ENCODE measurements at regions of chr3 and their contacts with region 1.

Region 1: GRCh38 chr3:58008140-58009025 is at the start of gene FLNB:
- DNase-seq: peak in 1 of 2 donors; percentile 81
- H3K4me3 ChIP-seq: peak within 1 kb of the TSS; percentile 85 to 100
- H3K27ac ChIP-seq: peak within 1 kb of the TSS; percentile 80 to 87
- H3K4me1 ChIP-seq: peaks cover 8 to 25% of the 10 kb centered on the region in 2 donors
- H3K27me3 ChIP-seq: no peaks in the 10 kb centered on the region
- CTCF ChIP-seq: peak; percentile 77 to 91 (median 87)
- total RNA-seq, gene FLNB: 144 TPM

Region 2: GRCh38 chr3:57864853-57865252 is 143.5 kb before region 1 on chr3:
- intact Hi-C with region 1: loop called (anchors 5 kb)
- DNase-seq: no peak
- H3K4me3 ChIP-seq: no peak overlapping the region
- H3K27ac ChIP-seq: peak overlapping the region in 1 of 2 donors; percentile 30
- H3K4me1 ChIP-seq: no peaks in the 10 kb centered on the region
- H3K27me3 ChIP-seq: no peaks in the 10 kb centered on the region
- CTCF ChIP-seq: peak; percentile 17 to 72 (median 67)

Region 3: GRCh38 chr3:57951066-57951882 is 57.1 kb before region 1 on chr3:
- intact Hi-C with region 1: loop called (anchors 5 kb)
- DNase-seq: peak; percentile 74 to 90
- H3K4me3 ChIP-seq: peak overlapping the region in 1 of 2 donors; percentile 19
- H3K27ac ChIP-seq: peak overlapping the region; percentile 93 to 97
- H3K4me1 ChIP-seq: peaks cover 6 to 29% of the 10 kb centered on the region in 2 donors
- H3K27me3 ChIP-seq: no peaks in the 10 kb centered on the region
- CTCF ChIP-seq: no peak

Region 4: DNA sequence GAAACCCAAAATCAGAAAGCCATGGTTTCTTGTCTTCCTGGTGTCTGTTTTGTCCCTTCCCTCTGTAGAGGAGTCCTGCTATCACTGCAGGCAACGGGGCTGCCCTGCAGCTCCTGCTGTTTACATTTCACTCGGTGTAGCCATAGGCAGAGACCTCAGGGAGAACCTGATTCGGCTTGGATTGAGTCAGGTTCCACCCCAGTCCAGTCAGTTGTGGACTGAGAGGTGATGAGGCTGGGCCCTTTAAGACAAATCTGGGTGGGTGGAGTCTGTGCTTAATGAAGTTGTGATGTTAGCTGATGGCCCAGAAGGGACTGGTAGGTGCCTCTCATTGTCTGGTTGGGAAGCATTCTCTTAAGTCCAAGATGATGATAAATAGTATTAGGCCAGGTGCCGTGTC is 35.5 kb after region 1 on chr3:
- intact Hi-C with region 1: no loop called
- DNase-seq: no peak
- H3K4me3 ChIP-seq: no peak overlapping the region
- H3K27ac ChIP-seq: peak overlapping the region; percentile 52 to 71
- H3K4me1 ChIP-seq: peaks cover 25 to 76% of the 10 kb centered on the region in 2 donors
- H3K27me3 ChIP-seq: no peaks in the 10 kb centered on the region
- CTCF ChIP-seq: no peak

Region 5: GRCh38 chr3:58090351-58090750 is 82.0 kb after region 1 on chr3:
- intact Hi-C with region 1: no loop called
- DNase-seq: no peak
- H3K4me3 ChIP-seq: no peak overlapping the region
- H3K27ac ChIP-seq: no peak overlapping the region
- H3K4me1 ChIP-seq: peaks cover 0 to 19% of the 10 kb centered on the region in 2 donors
- H3K27me3 ChIP-seq: no peaks in the 10 kb centered on the region
- CTCF ChIP-seq: no peak

Region 6: DNA sequence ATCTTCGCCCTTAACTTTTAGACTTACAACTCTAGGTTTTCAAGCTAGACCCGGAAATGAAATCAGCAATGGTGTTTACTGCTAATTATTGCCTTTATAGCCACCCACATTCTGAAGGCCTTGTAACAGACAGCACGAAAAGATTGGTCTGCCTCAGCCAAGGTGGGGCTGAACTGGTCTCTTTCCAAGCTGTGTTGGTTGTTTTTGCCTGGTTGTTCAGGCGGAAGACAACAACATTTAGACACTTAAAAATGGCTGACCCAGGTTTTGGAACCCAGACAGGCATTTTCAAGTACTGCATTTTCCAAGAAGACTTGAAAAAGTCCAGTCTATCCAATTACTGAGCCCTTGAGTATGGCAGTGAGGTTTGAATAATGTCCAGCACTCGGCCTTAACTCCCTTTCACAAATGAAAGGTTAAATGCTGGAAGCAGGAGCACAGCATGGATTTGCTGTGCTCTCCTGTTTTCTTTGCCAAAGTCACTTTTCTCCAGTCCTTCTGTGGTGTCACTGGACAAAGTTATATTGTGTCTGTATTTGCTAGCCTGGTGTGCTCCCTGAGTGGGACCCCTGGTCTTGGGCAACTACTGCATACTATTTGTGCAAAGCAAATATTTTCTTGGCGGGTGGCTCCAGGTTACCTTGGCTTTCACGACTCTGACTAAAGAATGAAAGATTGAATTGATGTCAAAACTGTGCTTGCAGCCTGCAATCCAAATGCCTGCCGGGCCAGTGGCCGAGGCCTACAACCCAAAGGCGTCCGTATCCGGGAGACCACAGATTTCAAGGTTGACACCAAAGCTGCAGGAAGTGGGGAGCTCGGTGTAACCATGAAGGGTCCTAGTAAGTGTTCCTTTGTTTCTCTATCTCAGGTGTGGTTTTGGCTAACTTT is 93.4 kb after region 1 on chr3:
- intact Hi-C with region 1: loop called (anchors 2 kb)
- DNase-seq: peak in 1 of 2 donors; percentile 70
- H3K4me3 ChIP-seq: no peak overlapping the region
- H3K27ac ChIP-seq: peak overlapping the region; percentile 77 to 79
- H3K4me1 ChIP-seq: peaks cover 12 to 32% of the 10 kb centered on the region in 2 donors
- H3K27me3 ChIP-seq: no peaks in the 10 kb centered on the region
- CTCF ChIP-seq: no peak

Region 7: GRCh38 chr3:58116161-58116955 is 108.0 kb after region 1 on chr3:
- intact Hi-C with region 1: loop called (anchors 5 kb)
- DNase-seq: no peak
- H3K4me3 ChIP-seq: no peak overlapping the region
- H3K27ac ChIP-seq: peak overlapping the region; percentile 60 to 68
- H3K4me1 ChIP-seq: peaks cover 14 to 36% of the 10 kb centered on the region in 2 donors
- H3K27me3 ChIP-seq: no peaks in the 10 kb centered on the region
- CTCF ChIP-seq: no peak

Region 8: GRCh38 chr3:58167431-58168351 is 159.3 kb after region 1 on chr3:
- intact Hi-C with region 1: loop called (anchors 2 kb)
- DNase-seq: peak; percentile 36 to 87
- H3K4me3 ChIP-seq: peak overlapping the region in 1 of 2 donors; percentile 16
- H3K27ac ChIP-seq: peak overlapping the region; percentile 77 to 81
- H3K4me1 ChIP-seq: peaks cover 11 to 41% of the 10 kb centered on the region in 2 donors
- H3K27me3 ChIP-seq: no peaks in the 10 kb centered on the region
- CTCF ChIP-seq: peak; percentile 62 to 94 (median 92)

Region 9: DNA sequence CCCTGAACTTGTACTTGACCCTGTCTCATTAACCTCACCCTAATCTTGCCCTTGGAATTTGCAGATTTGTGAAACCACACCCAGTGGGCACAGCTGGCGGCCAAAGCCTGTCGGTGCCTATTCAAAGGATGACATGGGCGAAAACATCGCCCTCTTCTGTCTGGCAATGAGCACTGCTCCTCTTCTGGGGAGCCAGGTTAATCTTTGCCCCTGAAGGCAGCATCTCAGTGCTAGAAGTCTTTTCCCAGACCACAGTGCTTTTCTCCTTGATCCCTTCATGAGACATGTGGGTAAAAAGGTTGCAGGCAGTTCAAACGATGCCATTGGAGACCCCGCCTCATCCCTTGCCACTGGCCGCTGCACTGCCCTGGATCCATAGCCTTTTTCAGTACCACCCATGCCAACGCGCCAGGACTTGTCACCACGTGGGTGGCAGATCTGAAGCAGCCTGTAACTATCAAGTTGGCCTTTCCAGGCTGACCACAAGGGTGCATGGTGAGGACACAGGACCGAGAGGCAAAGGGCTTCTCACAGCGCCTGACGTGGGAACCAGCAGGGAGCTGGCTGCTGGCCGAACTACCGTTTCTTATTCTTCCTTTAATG is 208.9 kb after region 1 on chr3:
- intact Hi-C with region 1: loop called (anchors 1 kb)
- DNase-seq: peak; percentile 58 to 86
- H3K4me3 ChIP-seq: no peak overlapping the region
- H3K27ac ChIP-seq: no peak overlapping the region
- H3K4me1 ChIP-seq: no peaks in the 10 kb centered on the region
- H3K27me3 ChIP-seq: no peaks in the 10 kb centered on the region
- CTCF ChIP-seq: peak; percentile 49 to 78 (median 62)

Measured in ascending aorta (tissue), 2 donors.